Endothelial cell of umbilical vein (primary cell): ENCODE measurements at regions of chr2 and their contacts with region 1.

Region 1: GRCh38 chr2:96638144-96639121 is at the start of gene KANSL3:
- DNase-seq: peak; percentile 91
- H3K4me3 ChIP-seq: peak within 1 kb of the TSS; percentile 70 to 92 (median 91)
- H3K27ac ChIP-seq: peak within 1 kb of the TSS; percentile 92
- H3K4me1 ChIP-seq: peaks cover 19% of the 10 kb centered on the region
- H3K27me3 ChIP-seq: no peaks in the 10 kb centered on the region
- CTCF ChIP-seq: no peak
- POLR2A ChIP-seq: peak; percentile 92
- total RNA-seq, gene KANSL3: 36.9 and 37.4 TPM in 2 replicates

Region 2: GRCh38 chr2:96180521-96180920 is 457.9 kb before region 1 on chr2:
- CTCF ChIA-PET with region 1: no interaction called
- POLR2A ChIA-PET with region 1: no interaction called
- dilution Hi-C with region 1: no loop called
- intact Hi-C with region 1: no loop called
- DNase-seq: no peak
- H3K4me3 ChIP-seq: no peak overlapping the region
- H3K27ac ChIP-seq: no peak overlapping the region
- H3K4me1 ChIP-seq: no peaks in the 10 kb centered on the region
- H3K27me3 ChIP-seq: no peaks in the 10 kb centered on the region
- CTCF ChIP-seq: no peak
- POLR2A ChIP-seq: no peak

Region 3: GRCh38 chr2:96618604-96619283 is 19.7 kb before region 1 on chr2:
- CTCF ChIA-PET with region 1: interaction called, 4 read pairs
- POLR2A ChIA-PET with region 1: no interaction called
- dilution Hi-C with region 1: no loop called
- intact Hi-C with region 1: loop called (anchors 1 kb)
- DNase-seq: no peak
- H3K4me3 ChIP-seq: no peak overlapping the region
- H3K27ac ChIP-seq: no peak overlapping the region
- H3K4me1 ChIP-seq: peaks cover 2% of the 10 kb centered on the region
- H3K27me3 ChIP-seq: no peaks in the 10 kb centered on the region
- CTCF ChIP-seq: no peak
- POLR2A ChIP-seq: no peak

Region 4: DNA sequence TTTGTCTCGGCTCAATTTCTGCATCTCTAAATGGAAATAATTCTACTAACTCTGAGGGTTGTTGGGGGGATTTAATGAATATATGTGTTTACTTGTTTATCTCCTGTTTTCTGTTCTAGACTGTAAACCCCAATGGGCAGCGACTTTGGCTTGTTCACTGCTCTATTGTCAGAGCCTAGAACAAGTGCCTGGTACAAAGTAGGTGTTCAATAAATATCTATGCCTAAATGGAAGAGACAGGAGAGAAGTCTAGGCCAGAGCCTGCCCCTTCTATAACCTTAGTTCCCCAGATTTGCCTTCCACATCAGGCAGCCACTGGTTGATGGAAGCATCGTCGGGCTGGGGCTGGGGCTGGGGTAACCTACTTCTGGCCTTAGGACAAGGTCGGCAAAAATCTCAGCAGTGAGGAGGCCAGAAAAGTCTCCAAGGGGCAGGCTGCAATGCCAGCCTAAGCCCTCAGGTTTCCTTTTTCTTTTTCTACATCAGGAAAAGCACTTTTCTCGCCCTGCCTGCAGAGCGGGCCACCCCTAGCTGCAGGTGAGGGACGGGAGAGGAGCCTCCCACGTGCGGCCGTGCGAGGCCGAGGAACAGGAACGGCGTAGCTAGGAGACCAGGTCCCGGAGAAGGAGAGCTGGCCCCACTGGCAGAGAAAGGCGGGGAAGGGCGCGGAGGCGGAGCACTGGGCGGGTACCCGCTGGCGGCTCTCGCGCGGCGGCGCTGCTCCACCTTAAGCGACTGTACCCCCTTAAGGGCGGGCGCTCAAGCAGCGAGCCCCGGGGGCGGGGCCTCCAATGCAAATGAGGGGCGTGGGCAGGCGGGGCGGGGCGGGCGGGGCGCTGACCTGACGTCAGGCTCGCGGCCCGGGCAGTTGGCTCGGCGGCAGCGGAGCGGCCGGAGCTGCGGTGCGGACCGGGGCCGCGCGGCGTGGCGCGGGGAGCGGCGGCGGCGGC is 121.9 kb after region 1 on chr2 and contains the start of gene CNNM4:
- CTCF ChIA-PET with region 1: interaction called, 3 read pairs
- POLR2A ChIA-PET with region 1: no interaction called
- dilution Hi-C with region 1: no loop called
- intact Hi-C with region 1: loop called (anchors 2 kb)
- DNase-seq: peak; percentile 92
- H3K4me3 ChIP-seq: peak within 1 kb of the TSS in 2 of 3 experiments; percentile 31 to 32
- H3K27ac ChIP-seq: no peak within 1 kb of the TSS
- H3K4me1 ChIP-seq: peaks cover 16% of the 10 kb centered on the region
- H3K27me3 ChIP-seq: no peaks in the 10 kb centered on the region
- CTCF ChIP-seq: peak in 1 of 2 donors; percentile 14
- POLR2A ChIP-seq: peak; percentile 69
- total RNA-seq, gene CNNM4: 5.3 TPM in 2 replicates

Region 5: DNA sequence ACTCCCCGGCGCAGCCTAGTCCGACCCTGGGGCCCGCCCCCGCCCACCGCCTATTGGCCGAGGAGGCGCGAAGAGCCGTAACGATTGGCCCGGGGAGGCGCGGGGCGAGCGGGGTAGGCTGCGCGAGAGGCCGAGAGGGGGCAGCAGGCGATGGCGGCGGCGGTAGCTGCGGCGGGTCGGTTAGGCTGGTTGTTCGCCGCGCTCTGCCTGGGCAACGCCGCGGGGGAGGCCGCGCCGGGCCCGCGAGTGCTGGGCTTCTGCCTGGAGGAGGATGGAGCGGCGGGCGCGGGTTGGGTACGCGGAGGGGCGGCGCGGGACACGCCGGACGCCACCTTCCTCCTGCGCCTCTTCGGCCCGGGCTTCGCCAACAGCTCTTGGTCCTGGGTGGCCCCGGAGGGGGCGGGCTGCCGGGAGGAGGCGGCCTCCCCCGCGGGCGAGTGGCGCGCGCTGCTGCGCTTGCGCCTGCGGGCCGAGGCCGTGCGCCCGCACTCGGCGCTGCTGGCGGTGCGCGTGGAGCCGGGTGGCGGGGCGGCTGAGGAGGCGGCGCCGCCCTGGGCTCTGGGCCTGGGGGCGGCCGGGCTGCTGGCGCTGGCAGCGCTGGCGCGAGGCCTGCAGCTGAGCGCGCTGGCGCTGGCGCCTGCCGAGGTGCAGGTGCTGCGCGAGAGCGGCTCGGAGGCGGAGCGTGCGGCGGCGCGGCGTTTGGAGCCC is 177.8 kb after region 1 on chr2 and contains the start of gene CNNM3:
- CTCF ChIA-PET with region 1: no interaction called
- POLR2A ChIA-PET with region 1: no interaction called
- dilution Hi-C with region 1: no loop called
- intact Hi-C with region 1: loop called (anchors 1 kb)
- DNase-seq: peak; percentile 95
- H3K4me3 ChIP-seq: peak within 1 kb of the TSS; percentile 52 to 82 (median 75)
- H3K27ac ChIP-seq: no peak within 1 kb of the TSS
- H3K4me1 ChIP-seq: peaks cover 13% of the 10 kb centered on the region
- H3K27me3 ChIP-seq: no peaks in the 10 kb centered on the region
- CTCF ChIP-seq: peak; percentile 45 to 76
- POLR2A ChIP-seq: peak; percentile 60
- total RNA-seq, gene CNNM3: 13.0 and 13.5 TPM in 2 replicates